ENCODE measurements at regions of chr1 and their contacts with region 1.

Region 1: GRCh38 chr1:84944767-84945486 is 51.9 kb upstream of the LPAR3 start:
- DNase-seq: peak; percentile 48
- ATAC-seq: peak; percentile 92
- H3K4me3 Mint-ChIP-seq: no peak overlapping the region
- H3K27ac Mint-ChIP-seq: peak overlapping the region; percentile 36; the same call in 1 of the 2 replicates
- H3K4me1 Mint-ChIP-seq: peaks cover 26% of the 10 kb centered on the region
- H3K27me3 Mint-ChIP-seq: no peaks in the 10 kb centered on the region
- CTCF ChIP-seq: peak; percentile 66

Region 2: GRCh38 chr1:84823511-84823910 is 121.4 kb before region 1 on chr1:
- CTCF ChIA-PET with region 1: no interaction called
- POLR2A ChIA-PET with region 1: no interaction called
- DNase-seq: no peak
- ATAC-seq: no peak
- H3K4me3 Mint-ChIP-seq: no peak overlapping the region
- H3K27ac Mint-ChIP-seq: no peak overlapping the region
- H3K4me1 Mint-ChIP-seq: peaks cover 20% of the 10 kb centered on the region
- H3K27me3 Mint-ChIP-seq: no peaks in the 10 kb centered on the region
- CTCF ChIP-seq: no peak

Region 3: GRCh38 chr1:84877592-84877991 is 67.3 kb before region 1 on chr1:
- CTCF ChIA-PET with region 1: no interaction called
- POLR2A ChIA-PET with region 1: no interaction called
- DNase-seq: no peak
- ATAC-seq: no peak
- H3K4me3 Mint-ChIP-seq: no peak overlapping the region
- H3K27ac Mint-ChIP-seq: no peak overlapping the region
- H3K4me1 Mint-ChIP-seq: peaks cover 3% of the 10 kb centered on the region; the same call in 1 of the 2 replicates
- H3K27me3 Mint-ChIP-seq: no peaks in the 10 kb centered on the region
- CTCF ChIP-seq: no peak

Region 4: DNA sequence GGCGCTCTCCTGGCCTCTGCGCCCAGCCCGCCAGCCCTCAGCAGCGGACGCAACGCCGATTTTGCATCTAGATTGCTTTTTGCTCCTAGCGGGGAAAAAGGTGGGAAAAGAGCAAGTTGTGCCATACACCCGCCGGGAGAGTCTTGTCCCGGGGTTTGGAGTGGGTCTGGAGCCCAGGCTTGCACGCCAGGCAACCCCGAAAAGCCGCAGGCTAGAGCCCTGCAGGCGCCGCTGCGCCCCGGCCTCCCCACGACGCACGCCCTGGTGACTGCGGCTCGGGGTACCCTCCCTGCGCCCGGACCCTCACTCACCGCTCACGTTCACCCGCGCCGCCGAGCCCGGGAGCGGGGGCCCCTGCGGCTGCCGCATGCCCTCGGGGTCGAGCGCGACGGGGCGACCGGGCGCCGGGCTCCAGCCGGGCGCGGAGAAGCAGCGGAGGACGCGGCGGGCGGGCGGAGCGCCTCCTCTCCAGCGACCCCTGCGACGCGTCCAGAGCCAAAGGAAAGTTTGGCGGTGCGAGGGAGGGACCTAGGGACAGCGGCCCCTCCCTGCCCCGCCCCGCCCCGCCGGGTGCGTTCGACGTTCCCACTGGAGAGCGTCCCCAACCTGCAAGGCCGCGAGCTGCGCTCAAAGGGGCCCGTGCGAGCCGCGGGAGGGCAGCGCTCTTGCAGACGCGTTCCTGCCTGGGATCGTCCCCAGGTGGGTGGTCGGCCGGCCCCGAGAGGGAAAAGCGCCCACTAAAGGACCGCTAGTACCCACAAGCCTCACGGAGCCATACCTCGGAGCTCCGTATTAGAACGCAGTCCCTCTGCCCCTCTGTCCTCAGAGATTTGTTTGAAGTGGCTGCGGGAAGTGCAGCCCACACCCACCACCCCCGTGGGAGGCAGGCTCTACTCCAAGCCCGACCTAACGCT is 52.0 kb before region 1 on chr1 and contains the start of gene LPAR3:
- CTCF ChIA-PET with region 1: interaction called, 13 read pairs
- POLR2A ChIA-PET with region 1: no interaction called
- DNase-seq: peak; percentile 82
- ATAC-seq: peak; percentile 82
- H3K4me3 Mint-ChIP-seq: peak within 1 kb of the TSS; percentile 84
- H3K27ac Mint-ChIP-seq: peak within 1 kb of the TSS; percentile 63
- H3K4me1 Mint-ChIP-seq: peaks cover 60% of the 10 kb centered on the region
- H3K27me3 Mint-ChIP-seq: peaks cover 21% of the 10 kb centered on the region
- CTCF ChIP-seq: no peak
- total RNA-seq, gene LPAR3: 26.8 to 33.3 TPM (median 27.6 TPM) in 3 replicates

Region 5: GRCh38 chr1:84996846-84997666 is 52.1 kb after region 1 on chr1 and contains the start of gene MCOLN2:
- CTCF ChIA-PET with region 1: interaction called, 22 read pairs
- POLR2A ChIA-PET with region 1: no interaction called
- DNase-seq: peak; percentile 67
- ATAC-seq: peak; percentile 84
- H3K4me3 Mint-ChIP-seq: peak within 1 kb of the TSS; percentile 81
- H3K27ac Mint-ChIP-seq: no peak within 1 kb of the TSS
- H3K4me1 Mint-ChIP-seq: peaks cover 17% of the 10 kb centered on the region
- H3K27me3 Mint-ChIP-seq: peaks cover 76% of the 10 kb centered on the region
- CTCF ChIP-seq: no peak
- total RNA-seq, gene MCOLN2: 3.8 to 5.4 TPM (median 4.8 TPM) in 3 replicates

Region 6: DNA sequence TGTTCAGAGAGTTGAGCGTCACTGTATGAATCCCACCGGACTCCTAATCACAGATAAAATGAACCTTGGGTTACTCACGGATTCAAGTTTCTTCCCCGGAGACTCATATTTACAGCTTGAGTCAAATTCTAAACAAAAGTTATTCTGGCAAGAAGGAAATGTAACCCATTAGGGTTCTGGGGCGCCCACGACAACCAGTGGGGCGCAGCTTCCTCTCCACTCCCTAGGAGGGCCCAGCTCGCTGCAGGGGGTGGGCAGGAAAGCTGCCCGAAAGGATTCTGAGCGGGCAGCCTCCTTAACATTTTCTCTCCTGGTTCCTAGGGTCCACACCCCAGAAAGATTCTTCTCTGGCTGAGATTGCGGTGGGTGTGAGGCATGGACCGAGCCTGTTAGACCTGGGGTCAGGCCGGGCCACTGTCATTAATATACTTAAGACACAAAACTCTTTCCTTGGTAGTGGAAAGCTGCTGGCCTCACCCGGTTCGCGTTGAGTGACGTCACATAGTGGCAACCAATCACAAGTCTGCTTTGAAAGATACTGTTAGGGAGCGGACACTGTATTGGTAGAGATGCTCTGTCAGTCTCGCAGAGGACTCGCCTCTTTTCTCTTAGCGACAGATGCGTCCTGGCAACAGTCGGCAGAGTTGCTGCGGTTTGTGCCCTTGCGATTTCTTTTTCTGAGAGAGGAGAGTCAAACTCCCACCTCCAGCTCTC is 116.9 kb after region 1 on chr1:
- CTCF ChIA-PET with region 1: interaction called, 21 read pairs
- POLR2A ChIA-PET with region 1: no interaction called
- DNase-seq: peak; percentile 91
- ATAC-seq: peak; percentile 100
- H3K4me3 Mint-ChIP-seq: peak overlapping the region; percentile 90
- H3K27ac Mint-ChIP-seq: peak overlapping the region; percentile 73; the same call in 1 of the 2 replicates
- H3K4me1 Mint-ChIP-seq: peaks cover 25% of the 10 kb centered on the region
- H3K27me3 Mint-ChIP-seq: peaks cover 8% of the 10 kb centered on the region
- CTCF ChIP-seq: no peak

Region 7: DNA sequence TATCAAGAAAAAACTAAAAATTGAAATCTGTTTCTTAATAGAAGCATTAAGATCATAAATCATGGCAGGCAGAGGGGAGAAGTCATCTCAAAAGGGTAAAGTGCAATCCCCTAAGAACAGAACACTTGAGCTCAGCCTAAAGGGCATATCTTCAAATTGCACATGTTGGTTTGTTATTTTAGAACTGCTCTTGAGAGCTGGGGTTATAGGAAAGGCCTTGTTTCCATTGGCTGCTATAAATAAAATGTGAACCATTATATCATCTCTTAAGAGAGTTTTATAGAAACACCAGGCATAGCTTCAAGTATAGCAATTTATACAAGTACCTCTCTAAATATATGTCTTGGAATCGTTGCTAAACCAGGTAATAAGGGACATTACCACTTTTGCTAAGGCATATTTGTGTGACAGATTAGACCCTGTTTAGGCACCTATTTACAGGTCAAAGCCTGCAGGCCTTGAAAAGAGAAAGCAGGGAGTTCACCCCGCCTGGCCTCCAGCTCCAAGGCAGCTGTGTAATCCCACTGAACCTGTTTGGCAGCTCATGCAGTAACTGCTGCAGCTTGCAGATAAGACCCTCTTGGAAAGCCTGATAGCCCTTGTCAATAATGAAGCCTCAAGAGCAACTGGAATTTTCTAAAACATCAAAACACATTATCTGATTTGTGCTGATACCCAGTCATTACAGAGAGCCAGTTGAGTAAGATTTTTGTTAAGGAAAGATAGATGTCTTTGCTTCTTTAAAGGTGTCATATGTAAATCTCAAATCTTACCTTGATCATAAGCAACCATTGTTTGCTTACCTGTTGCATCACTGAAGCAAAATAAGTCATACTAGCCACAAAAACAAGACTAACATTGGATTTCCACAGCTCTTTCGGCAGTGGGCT is 280.1 kb after region 1 on chr1:
- CTCF ChIA-PET with region 1: interaction called, 14 read pairs
- POLR2A ChIA-PET with region 1: no interaction called
- DNase-seq: peak; percentile 70
- ATAC-seq: peak; percentile 96
- H3K4me3 Mint-ChIP-seq: peak overlapping the region; percentile 30; the same call in 1 of the 2 replicates
- H3K27ac Mint-ChIP-seq: peak overlapping the region; percentile 71
- H3K4me1 Mint-ChIP-seq: peaks cover 46% of the 10 kb centered on the region
- H3K27me3 Mint-ChIP-seq: no peaks in the 10 kb centered on the region
- CTCF ChIP-seq: no peak

Region 8: DNA sequence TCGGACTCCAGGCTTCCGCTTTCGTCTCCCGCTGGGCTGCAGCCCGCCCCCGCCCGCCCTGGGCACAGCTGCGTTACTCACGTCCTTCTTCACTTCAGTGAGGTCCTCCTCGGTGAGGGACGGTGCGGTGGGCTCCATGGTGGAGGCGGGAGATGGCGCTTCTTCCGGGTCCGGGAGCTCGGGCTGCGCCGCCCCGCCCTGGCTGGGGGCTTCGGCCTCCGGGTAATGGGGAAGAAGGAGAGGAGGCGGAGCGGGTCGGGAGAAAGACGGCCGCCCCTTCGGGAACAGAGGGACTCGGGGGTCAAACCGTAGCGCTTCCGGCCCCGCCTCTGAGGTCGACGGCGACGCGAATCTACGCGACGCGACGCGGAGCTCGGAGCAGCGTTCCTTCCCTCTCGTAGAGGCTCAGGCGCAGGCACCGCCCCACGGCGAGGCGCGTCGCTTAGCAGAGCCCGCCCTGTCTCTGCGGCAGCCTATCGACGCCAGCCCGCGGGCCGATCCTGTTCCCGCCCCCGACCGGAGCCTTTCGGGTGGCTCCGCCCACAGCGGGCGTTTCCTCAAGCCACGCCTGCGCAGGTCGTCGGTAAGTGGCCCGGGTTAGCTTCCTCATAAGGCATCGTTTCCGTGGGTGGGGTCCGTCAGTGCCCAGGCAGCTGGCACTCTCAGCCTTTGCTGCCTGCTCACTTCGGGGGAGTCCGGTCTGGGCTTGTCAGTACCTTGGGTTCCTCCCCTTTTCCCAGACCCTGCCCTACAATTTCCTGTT is 331.5 kb after region 1 on chr1 and contains the start of gene BCL10:
- CTCF ChIA-PET with region 1: interaction called, 22 read pairs
- POLR2A ChIA-PET with region 1: no interaction called
- DNase-seq: peak; percentile 98
- ATAC-seq: peak; percentile 98
- H3K4me3 Mint-ChIP-seq: peak within 1 kb of the TSS; percentile 82
- H3K27ac Mint-ChIP-seq: peak within 1 kb of the TSS; percentile 96
- H3K4me1 Mint-ChIP-seq: peaks cover 34% of the 10 kb centered on the region
- H3K27me3 Mint-ChIP-seq: no peaks in the 10 kb centered on the region
- CTCF ChIP-seq: no peak
- total RNA-seq, gene BCL10: 21.3 to 24.2 TPM (median 21.4 TPM) in 3 replicates